Aorta (tissue), 5 donors: ENCODE measurements at regions of chr10 and their contacts with region 1.

Region 1: DNA sequence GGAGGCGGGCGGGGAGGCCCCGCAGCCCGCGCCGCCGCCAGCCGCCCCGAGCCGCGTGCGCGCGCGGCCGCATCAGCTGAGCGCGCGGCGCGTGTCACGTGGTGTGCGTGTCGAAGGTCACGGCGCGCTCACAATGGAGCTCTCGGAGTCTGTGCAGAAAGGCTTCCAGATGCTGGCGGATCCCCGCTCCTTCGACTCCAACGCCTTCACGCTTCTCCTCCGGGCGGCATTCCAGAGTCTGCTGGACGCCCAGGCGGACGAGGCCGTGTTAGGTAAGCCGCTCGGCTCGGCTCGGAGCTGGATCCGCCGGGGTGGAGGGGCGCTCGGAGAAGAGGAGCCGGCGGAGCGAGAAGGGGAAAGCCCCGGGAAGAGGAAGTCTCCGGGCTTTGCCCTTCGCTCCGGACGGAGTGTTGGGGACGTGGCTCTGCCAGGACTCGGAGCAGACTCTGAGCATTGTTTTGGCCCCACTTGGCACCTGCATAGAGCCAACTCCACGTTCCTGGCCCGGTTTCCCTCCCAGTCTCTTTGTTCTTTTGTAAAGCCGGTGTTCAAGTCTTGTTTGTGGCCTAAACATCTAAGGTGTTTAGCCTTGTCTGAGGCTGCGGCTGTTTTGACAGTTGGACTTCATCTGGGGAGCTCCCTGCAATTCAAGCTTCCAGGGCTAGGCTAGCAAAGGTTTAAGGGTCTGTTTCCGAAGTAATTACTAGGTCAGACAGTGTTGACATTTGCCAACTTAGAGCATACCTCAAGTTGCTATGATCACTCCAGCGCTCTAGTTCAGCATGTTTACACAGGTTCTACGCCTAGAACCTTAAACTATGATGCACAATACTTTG is at the start of gene COMMD3:
- DNase-seq: peak; percentile 93 to 95
- ATAC-seq: peak; percentile 96
- H3K4me3 ChIP-seq: peak within 1 kb of the TSS; percentile 68 to 73
- H3K27ac ChIP-seq: peak within 1 kb of the TSS in 1 of 2 donors; percentile 60
- H3K4me1 ChIP-seq: no peaks in the 10 kb centered on the region
- H3K27me3 ChIP-seq: no peaks in the 10 kb centered on the region
- total RNA-seq, gene COMMD3: 38.9 to 43.7 TPM

Region 2: DNA sequence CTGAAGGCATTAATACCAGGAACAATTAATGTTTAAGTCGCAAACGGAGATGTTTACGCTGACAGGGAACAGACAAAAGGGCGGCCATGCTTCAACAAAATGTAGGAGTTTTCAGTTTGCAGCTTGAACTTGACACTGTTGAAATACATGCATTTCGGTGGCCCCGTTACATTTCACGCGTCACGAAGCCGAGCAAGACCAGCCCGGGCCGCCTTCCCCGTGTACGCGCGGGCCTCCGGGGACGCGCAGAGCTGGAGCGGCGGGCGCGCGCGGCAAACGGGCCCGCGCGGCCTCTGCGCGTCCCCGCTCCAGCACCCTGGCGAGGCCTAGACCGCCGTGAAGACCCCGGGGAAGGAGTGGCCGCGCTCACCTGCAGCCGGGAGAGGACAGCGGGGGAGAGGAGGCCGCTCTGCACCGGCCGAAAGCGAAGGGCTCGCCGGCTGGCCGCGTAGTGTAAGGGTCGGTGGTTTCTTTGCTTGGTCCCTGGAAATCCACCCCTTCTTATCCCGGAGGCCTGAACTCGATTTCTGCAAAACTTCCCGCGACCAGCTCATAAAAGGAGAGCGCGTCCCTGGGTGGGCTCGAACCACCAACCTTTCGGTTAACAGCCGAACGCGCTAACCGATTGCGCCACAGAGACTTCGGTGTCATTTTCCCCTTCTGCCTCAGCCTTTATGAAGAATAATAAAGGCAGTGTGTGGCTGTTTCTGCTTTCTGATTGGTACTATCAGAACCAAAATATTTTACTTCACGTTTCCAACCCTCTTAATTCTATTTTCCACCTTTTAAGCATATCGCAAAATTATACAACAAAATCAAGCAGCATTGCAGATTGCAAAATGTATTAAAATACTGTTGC is 87.3 kb before region 1 on chr10:
- intact Hi-C with region 1: loop called (anchors 2 to 5 kb)
- DNase-seq: peak; percentile 89 to 94
- ATAC-seq: peak; percentile 99
- H3K4me3 ChIP-seq: peak overlapping the region; percentile 70 to 90
- H3K27ac ChIP-seq: peak overlapping the region in 1 of 2 donors; percentile 70
- H3K4me1 ChIP-seq: no peaks in the 10 kb centered on the region
- H3K27me3 ChIP-seq: no peaks in the 10 kb centered on the region

Region 3: DNA sequence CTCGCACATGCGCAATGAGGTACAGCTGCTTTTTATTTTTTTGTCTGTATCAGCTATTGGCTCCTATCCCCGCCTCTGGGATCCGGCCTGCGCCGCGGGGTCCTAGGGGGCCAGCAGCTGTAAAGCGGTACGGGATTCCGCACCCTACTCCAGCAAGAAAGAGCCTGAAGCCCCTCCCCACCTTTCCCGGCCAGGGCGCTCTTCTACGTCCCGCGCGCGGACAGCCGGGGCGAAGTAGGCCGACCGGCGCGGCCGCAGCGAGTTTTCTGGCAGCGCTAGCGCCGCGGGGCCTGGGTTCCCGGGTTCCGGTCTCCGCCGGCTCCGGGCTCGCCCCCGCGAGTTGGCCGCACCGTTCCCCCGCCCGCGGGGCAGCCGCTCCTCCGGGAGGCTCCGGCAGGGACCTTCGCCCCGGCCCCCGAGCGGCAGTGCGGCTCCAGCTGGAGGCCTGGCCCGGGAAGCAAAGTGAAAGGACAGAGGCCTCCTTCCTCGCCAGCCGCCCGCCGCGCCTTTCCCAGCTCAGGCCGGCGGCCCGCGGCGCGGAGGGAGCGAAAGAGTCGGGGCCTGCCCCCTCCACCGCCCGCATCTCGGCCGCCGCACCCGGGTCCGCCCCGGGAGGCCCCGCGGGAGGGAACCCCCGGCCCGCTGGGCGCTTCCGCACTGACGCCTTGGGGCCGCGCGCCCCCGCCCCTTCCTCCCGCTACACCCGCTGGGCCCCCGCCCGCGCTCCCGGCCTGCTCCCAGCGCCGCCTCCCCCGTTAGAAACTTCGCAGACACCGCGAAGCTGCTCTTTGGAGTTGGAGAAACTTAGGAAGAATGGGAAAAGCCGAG is 24.1 kb after region 1 on chr10:
- intact Hi-C with region 1: loop called in 1 of 2 experiments (anchors 2 kb)
- DNase-seq: peak; percentile 81 to 90
- ATAC-seq: peak; percentile 90
- H3K4me3 ChIP-seq: peak overlapping the region; percentile 83 to 94
- H3K27ac ChIP-seq: peak overlapping the region; percentile 73 to 77
- H3K4me1 ChIP-seq: no peaks in the 10 kb centered on the region
- H3K27me3 ChIP-seq: peaks cover 0 to 2% of the 10 kb centered on the region in 2 donors